ENCODE measurements at regions of chr14 and their contacts with region 1.

Region 1: DNA sequence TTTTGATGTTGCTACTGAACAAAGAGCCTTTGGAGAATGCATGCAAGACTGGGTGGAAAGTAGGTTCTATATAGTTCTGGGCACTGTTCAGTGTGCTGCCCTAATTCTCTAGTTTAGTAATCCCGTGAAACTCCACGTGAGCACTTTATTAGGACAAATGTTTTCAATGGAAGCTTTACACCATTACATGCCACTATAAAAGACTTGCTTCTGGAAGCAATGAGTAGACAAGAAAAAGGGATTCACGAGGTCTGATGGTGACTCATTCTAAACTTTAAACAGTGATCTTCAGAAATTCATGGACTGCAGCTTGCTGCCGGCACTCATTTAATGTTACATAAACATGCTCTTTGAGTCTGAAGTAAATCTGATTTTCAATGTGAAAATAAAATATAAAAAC is 22.3 kb downstream of the ATG14 start:
- DNase-seq: no peak
- H3K4me3 Mint-ChIP-seq: no peak overlapping the region
- H3K27ac Mint-ChIP-seq: no peak overlapping the region
- H3K4me1 Mint-ChIP-seq: peaks cover 52% of the 10 kb centered on the region
- H3K27me3 Mint-ChIP-seq: no peaks in the 10 kb centered on the region

Region 2: DNA sequence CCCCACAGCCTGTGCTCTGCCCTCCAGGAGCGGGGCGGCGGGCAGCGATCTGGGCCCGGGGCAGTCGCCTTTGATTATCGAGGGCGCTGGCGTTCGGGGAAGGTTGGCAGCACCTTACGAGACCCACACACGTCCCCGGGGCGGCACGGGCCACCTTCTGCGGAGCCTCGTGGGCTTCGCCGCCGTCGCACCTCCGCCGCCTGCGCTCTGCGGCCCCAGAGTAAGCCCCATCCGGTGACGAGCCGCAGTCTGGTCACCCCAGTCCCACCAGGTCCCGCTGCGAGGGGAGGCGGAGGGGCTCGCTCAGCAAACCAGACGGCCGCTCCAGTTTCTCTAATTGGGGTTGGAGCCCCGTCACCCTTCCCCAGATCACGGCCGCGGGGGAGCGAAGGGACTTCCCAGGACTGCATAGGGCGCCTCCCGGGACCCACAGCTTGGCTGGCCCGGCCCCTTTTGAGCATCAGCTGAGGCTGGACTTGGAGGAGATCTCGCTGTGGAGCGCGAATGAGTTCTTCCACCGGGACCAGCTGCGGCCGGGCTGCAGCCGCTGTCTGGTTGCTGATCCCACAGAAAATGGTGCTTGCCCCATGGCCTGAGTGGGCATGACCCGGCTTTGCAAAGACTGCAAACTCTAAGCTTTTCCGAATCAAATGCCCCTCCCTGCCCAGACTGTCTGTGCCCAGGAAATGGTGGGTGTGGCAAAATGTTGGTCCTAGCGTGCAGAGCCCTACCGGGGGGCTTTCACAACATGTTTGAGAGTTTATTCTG is 259.7 kb before region 1 on chr14:
- CTCF ChIA-PET with region 1: no interaction called
- intact Hi-C with region 1: no loop called
- DNase-seq: peak; percentile 61
- H3K4me3 Mint-ChIP-seq: peak overlapping the region; percentile 61
- H3K27ac Mint-ChIP-seq: no peak overlapping the region
- H3K4me1 Mint-ChIP-seq: peaks cover 4% of the 10 kb centered on the region
- H3K27me3 Mint-ChIP-seq: peaks cover 37% of the 10 kb centered on the region

Region 3: GRCh38 chr14:55333711-55334485 is 55.4 kb before region 1 on chr14:
- CTCF ChIA-PET with region 1: no interaction called
- intact Hi-C with region 1: loop called (anchors 5 kb)
- DNase-seq: peak; percentile 21
- H3K4me3 Mint-ChIP-seq: peak overlapping the region; percentile 10
- H3K27ac Mint-ChIP-seq: peak overlapping the region; percentile 78
- H3K4me1 Mint-ChIP-seq: peaks cover 82% of the 10 kb centered on the region
- H3K27me3 Mint-ChIP-seq: no peaks in the 10 kb centered on the region

Region 4: DNA sequence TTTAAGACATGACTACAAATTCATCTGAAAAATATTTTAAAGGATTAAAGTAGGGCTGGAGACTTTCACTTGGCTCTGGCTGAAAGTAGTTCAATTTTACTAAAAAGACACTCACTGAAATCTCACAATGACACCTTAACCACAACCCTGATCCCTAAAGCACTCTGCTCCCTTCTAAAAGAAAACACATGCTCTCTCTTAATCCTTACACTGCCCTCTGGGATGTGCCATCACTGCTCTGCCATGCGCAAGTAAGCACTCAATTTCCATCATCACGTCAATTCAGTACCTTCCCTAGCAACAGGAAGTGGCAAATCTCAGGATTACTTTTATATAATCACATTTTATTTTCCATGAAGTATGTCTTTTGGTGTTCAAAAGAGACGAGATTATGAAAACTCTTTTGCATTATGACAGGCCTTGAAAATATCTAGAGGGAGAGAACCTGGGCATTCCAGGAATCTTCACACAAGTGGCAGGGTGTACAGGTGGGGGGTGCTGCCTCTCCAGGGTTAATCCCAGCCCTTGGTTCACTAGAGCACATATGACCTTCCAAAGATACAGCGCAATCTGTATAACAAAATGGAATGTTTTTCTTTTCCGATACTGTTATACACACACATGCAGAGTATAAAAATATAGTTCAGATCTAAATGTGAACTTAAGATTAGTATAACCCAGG is 15.0 kb after region 1 on chr14:
- CTCF ChIA-PET with region 1: interaction called, 3 read pairs
- intact Hi-C with region 1: loop called (anchors 1 kb)
- DNase-seq: no peak
- H3K4me3 Mint-ChIP-seq: no peak overlapping the region
- H3K27ac Mint-ChIP-seq: peak overlapping the region; percentile 0
- H3K4me1 Mint-ChIP-seq: peaks cover 55% of the 10 kb centered on the region
- H3K27me3 Mint-ChIP-seq: no peaks in the 10 kb centered on the region

Measured in activated naive CD4-positive, alpha-beta T cell treated with anti-CD3 and anti-CD28 coated beads for 36 hours (primary cell).